IMR-90 (cell line): ENCODE measurements at regions of chr5 and their contacts with region 1.

Region 1: DNA sequence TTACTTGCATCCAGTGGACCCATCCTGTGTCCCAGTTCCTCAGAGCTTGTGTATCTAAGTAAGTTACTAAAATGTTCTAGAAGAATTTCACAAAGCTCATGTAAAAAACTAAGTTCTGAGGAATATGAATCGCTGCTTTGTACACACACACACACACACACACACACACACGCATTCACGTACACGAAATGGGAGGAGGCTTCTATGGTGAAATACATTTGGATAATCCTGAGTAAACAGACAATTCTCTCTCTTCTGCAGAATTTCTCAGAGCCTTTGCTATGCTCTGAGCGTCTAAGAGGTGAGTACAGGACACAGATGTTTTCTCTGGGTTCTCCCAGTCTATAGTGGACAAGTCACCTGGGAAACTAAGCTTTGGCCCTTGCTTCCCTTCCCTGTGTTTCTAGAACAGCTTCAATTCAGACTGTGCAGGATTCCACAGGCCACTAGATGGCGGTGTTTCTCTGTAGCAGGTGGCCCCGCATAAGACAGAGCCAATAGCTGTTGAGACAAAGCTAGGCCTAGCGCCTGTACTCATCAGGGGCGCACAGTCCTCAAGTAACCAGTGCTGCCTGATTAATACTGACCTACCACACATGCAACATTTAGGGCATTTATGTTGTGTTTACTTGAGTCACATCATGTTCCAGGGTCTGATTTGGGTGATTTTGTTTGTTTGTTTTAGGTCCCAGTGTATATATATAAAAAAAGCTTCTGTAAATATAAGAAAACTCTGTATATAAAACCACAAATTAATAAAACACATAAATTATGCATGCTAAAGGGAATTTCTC is 114.8 kb downstream of the LIFR start:
- DNase-seq: peak; percentile 91
- ATAC-seq: peak; percentile 100
- H3K4me3 ChIP-seq: no peak overlapping the region
- H3K27ac ChIP-seq: no peak overlapping the region
- H3K4me1 ChIP-seq: peaks cover 4% of the 10 kb centered on the region
- H3K27me3 ChIP-seq: peaks cover 10% of the 10 kb centered on the region
- CTCF ChIP-seq: peak; percentile 99
- POLR2A ChIP-seq: peak; percentile 58
- RAD21 ChIP-seq: peak; percentile 100

Region 2: GRCh38 chr5:38420691-38421390 is 20.8 kb before region 1 on chr5:
- CTCF ChIA-PET with region 1: interaction called, 10 read pairs
- POLR2A ChIA-PET with region 1: no interaction called
- dilution Hi-C with region 1: no loop called
- in situ Hi-C with region 1: no loop called
- intact Hi-C with region 1: no loop called
- DNase-seq: peak; percentile 69
- ATAC-seq: peak; percentile 85
- H3K4me3 ChIP-seq: no peak overlapping the region
- H3K27ac ChIP-seq: no peak overlapping the region
- H3K4me1 ChIP-seq: peaks cover 10% of the 10 kb centered on the region
- H3K27me3 ChIP-seq: peaks cover 5% of the 10 kb centered on the region; the same call in 1 of the 2 replicates
- CTCF ChIP-seq: peak; percentile 75
- POLR2A ChIP-seq: no peak
- RAD21 ChIP-seq: peak; percentile 75

Region 3: DNA sequence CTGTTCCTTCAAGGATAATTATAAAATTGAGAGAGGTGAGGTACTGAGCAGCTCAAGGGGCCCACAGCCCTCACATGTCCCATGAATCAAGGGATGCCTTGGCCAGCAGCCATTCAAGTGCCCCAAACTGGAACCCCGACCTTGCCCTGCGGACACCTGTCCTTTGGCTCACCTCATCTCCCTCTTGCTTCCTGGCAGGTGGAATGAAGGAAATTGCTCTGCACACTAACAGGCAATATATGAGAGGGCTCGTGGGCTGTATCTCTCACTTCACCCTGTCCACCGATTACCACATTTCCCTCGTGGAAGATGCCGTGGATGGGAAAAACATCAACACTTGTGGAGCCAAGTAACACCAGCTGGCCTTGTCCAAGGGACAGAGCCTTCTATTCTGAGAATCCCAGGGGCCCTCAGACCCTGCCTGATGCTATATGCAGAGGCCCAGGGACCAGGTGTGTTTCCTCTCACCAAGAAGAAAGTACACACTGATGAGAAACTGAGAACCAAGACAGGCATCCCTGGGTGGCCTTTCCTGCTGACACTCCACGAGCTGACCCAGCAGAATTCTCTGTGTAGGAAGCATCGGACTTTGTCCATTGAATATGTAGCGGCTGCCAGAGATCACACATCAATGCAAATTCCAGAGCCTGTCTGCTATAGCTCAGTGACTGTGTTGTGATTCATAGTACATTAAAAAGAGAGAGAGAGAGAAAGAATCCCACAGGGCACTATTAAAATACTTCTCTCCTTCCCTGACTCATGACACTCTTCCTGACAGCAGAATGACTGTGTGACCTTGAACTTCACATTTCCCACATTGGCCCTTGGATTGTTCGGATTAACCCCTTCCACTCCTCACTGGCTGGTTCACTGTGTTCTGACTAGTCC is 22.2 kb after region 1 on chr5:
- CTCF ChIA-PET with region 1: interaction called, 16 read pairs
- POLR2A ChIA-PET with region 1: no interaction called
- dilution Hi-C with region 1: no loop called
- in situ Hi-C with region 1: no loop called
- intact Hi-C with region 1: no loop called
- DNase-seq: peak; percentile 93
- ATAC-seq: peak; percentile 52
- H3K4me3 ChIP-seq: no peak overlapping the region
- H3K27ac ChIP-seq: peak overlapping the region; percentile 22
- H3K4me1 ChIP-seq: peaks cover 45% of the 10 kb centered on the region
- H3K27me3 ChIP-seq: no peaks in the 10 kb centered on the region
- CTCF ChIP-seq: no peak
- POLR2A ChIP-seq: no peak
- RAD21 ChIP-seq: no peak

Region 4: DNA sequence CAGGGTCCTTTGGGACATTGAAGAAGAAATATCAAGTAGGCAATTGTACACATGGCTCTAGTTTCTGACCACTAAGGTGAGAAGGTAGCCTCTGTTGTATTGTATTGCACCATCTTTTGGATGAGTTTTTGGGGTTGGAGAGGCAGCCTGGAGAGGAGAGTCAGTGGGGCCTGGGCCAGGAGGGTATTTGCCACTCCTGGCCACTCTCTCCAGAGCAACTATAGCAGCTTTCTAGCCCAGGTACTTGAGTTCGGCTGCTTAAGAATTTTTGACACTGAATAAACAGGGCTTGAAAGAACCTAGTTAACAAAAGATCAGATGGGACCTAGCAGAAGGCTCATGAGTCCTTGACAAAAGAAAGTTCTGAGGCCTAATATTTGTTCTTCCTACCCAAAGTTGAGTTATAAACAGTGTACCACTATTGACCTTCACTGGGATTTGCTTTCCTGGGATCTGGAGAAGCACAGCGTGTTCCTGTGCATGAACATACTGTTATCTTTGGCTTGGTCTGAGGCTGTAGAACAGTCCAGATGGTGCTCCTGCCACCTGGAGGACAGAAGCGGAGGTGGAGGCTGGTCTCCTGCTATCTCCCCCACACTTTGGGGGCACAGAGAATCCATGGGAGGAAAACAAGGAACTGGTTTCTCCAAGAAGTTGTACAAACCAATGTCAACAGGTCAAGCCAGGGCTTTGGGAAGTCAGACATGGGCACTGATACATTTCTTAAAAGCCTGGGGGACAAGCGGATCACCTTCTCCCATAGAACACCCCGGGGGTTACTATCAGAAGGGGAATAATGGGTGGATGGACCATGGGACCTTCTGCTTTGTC is 225.2 kb after region 1 on chr5:
- CTCF ChIA-PET with region 1: interaction called, 7 read pairs
- POLR2A ChIA-PET with region 1: no interaction called
- dilution Hi-C with region 1: no loop called
- in situ Hi-C with region 1: no loop called
- intact Hi-C with region 1: loop called (anchors 1 kb)
- DNase-seq: peak; percentile 34
- ATAC-seq: peak; percentile 71
- H3K4me3 ChIP-seq: no peak overlapping the region
- H3K27ac ChIP-seq: no peak overlapping the region
- H3K4me1 ChIP-seq: peaks cover 3% of the 10 kb centered on the region; the same call in 1 of the 2 replicates
- H3K27me3 ChIP-seq: peaks cover 18% of the 10 kb centered on the region
- CTCF ChIP-seq: peak; percentile 53
- POLR2A ChIP-seq: no peak
- RAD21 ChIP-seq: peak; percentile 65

Region 5: DNA sequence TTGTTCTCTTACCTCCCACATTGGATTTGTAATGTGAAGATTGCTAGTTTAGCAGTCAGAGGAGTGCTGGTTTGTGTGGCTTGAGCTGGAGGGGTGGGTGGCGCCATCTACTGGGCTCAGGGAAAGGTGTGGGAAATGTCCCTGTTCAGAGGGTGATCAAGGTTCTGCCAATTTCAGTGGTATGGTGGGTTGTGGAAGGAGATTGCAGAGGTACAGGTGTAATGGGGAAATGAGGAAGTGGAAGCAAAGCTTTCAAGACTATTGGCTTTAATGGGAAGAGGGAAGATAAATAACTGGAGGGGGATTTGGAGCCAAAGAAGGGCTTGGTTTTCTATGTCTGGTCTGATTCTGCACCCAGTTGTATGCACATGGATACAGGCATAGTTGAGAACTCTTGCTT is 480.5 kb after region 1 on chr5:
- CTCF ChIA-PET with region 1: interaction called, 3 read pairs
- POLR2A ChIA-PET with region 1: no interaction called
- dilution Hi-C with region 1: no loop called
- in situ Hi-C with region 1: no loop called
- intact Hi-C with region 1: loop called (anchors 5 kb)
- DNase-seq: peak; percentile 51
- ATAC-seq: peak; percentile 43
- H3K4me3 ChIP-seq: no peak overlapping the region
- H3K27ac ChIP-seq: no peak overlapping the region
- H3K4me1 ChIP-seq: peaks cover 12% of the 10 kb centered on the region
- H3K27me3 ChIP-seq: no peaks in the 10 kb centered on the region
- CTCF ChIP-seq: peak; percentile 65
- POLR2A ChIP-seq: no peak
- RAD21 ChIP-seq: peak; percentile 77